ENCODE measurements at regions of chr3 and their contacts with region 1.

Region 1: GRCh38 chr3:131067983-131068382 is 41.3 kb downstream of the NEK11 start:
- DNase-seq: no peak

Region 2: DNA sequence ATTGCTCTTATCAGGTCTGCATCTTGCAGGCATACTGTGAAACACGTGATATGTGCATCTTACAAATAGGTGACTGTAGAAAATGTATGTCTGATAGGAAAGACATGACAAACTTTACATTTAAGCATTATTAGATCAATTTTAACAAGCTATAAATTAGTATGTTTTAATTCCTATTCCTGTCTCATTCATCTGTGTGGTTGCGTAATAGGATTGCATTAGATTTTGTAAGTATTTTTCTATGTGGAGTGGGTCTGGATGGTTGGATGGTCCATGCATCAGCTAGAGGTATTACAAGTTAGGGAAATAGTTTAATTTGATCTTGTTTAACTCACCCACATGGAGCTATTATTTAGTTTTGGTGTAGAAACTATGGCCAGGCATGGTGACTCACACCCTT is 60.2 kb before region 1 on chr3:
- intact Hi-C with region 1: no loop called
- DNase-seq: no peak

Region 3: DNA sequence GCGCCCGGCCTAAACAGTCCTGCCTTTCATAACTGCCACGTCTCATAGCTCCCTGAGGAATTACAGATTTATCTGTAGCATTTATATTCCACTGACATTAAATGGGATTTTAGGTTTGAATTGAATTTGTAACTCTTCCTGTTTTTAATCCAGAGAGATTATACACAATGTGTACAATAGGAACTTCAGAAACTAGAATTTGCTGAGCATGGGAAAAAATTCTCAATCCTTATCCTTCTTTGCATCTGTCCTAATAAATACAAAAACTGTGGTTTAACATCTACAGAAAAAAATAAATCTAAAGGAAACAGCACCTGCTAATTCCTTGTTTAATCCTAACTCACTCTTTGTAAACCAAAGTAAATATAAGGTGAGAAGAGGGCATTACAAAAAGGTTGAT is 39.1 kb before region 1 on chr3:
- intact Hi-C with region 1: loop called in 1 of 2 experiments (anchors 2 kb)
- DNase-seq: no peak

Measured in posterior vena cava (tissue), 2 donors.